CD4-positive, alpha-beta memory T cell (primary cell): ENCODE measurements at regions of chr1 and their contacts with region 1.

Region 1: DNA sequence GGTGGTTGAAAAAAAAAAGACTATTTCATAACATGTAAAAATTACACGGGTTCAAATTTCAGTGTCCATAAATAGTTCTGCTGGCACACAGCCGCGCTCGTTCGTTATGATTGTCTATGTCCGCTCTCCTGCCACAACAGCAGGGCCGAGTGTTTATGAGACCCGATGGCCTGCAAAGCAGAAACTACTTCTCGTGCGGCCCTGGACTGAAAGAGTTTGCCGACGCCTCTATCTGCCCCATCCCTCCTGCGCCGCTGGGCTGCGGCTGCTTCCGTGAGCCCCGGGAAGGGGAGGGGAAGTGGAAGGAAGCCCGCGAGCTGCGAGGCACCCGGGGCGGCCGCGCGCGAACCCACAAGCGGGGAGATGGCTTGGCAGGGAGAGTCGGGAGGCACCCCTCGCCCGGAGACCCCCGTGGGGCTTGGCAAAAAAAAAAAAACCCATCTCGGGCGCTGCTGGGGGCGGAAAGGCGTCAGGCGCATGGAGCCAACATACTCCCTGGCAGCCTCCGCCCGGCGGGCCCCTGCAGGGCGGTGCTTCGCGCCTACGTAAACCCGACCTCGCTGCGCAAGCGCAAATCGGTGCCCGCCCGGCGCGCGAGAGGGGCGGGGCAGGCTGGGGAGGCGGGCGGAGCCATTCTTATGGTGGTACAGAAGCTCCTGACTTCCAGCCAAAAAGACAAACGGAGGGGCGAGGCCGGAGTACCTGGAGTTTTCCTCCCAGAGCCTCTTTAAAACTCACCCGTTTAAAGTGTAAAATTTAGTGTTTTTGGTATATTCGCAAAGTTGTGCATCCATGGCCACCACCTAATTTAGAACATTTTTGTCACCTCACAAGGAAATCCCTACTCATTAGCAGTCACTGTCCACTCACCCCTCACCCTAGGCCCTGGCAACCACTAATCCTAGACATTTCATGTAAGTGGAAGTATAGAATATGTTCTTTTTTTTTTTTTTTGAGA is 8.3 kb downstream of the SLC27A3 start:
- DNase-seq: peak; percentile 89 to 94 (median 92)
- H3K4me3 ChIP-seq: peak overlapping the region; percentile 55 to 73
- H3K4me3 Mint-ChIP-seq: peak overlapping the region; percentile 88 to 97 (median 92)
- H3K27ac ChIP-seq: peak overlapping the region; percentile 84
- H3K27ac Mint-ChIP-seq: peak overlapping the region; percentile 89 to 99 (median 98)
- H3K4me1 ChIP-seq: peaks cover 6% of the 10 kb centered on the region
- H3K4me1 Mint-ChIP-seq: peaks cover 4 to 12% (median 11%) of the 10 kb centered on the region in 4 donors
- H3K27me3 ChIP-seq: no peaks in the 10 kb centered on the region
- H3K27me3 Mint-ChIP-seq: peaks cover 0 to 2% of the 10 kb centered on the region in 2 donors

Region 2: DNA sequence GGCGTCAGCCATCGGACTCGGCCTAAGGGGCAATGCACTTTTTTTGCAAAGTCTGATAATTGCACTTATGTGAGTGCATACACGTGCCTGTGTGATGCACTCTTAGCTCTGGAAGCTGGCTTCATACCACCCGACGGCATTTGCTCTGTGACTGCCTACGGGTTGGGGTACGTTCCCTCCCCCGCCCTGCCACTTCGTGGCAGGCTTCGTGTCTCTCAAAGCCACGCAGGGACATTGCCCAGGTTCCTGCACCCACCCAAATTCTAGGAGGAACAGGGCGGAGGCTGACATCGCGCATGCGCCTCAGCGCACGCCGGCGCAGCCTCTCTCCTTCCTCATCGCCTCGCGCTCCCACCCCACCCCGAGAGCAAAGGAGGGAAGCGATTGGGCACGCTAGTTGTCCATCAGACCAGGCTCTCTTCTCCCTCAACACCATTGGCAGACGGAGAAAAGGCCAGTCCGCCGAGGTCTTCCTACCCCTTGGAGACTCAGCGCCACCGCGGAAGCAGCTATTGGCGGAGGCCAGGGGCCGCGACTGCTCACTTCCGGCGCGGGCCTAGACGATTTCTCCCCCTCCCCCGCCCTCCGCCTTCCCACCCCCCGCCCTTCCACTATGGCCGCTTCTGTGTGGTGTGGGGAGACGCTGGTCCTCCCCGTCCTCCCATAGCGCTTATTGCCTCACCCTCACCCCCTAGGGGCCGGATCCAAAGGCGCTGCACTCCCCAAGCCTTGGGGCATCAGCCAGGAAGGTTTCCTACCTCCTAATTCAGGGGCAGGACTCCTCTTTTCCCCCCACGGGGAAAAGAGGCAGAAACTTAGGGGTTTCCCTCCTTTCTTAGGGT is 55.8 kb before region 1 on chr1 and contains the start of gene INTS3:
- CTCF ChIA-PET with region 1: no interaction called
- POLR2A ChIA-PET with region 1: no interaction called
- intact Hi-C with region 1: loop called (anchors 2 kb)
- DNase-seq: peak; percentile 98 to 100 (median 99)
- H3K4me3 ChIP-seq: peak within 1 kb of the TSS; percentile 79 to 98
- H3K4me3 Mint-ChIP-seq: peak within 1 kb of the TSS; percentile 88 to 96 (median 93)
- H3K27ac ChIP-seq: peak within 1 kb of the TSS; percentile 93
- H3K27ac Mint-ChIP-seq: peak within 1 kb of the TSS; percentile 93 to 99 (median 97)
- H3K4me1 ChIP-seq: peaks cover 32% of the 10 kb centered on the region
- H3K4me1 Mint-ChIP-seq: peaks cover 19 to 36% (median 29%) of the 10 kb centered on the region in 4 donors
- H3K27me3 ChIP-seq: no peaks in the 10 kb centered on the region
- H3K27me3 Mint-ChIP-seq: no peaks in the 10 kb centered on the region
- total RNA-seq, gene INTS3: 49.1 to 53.0 TPM

Region 3: DNA sequence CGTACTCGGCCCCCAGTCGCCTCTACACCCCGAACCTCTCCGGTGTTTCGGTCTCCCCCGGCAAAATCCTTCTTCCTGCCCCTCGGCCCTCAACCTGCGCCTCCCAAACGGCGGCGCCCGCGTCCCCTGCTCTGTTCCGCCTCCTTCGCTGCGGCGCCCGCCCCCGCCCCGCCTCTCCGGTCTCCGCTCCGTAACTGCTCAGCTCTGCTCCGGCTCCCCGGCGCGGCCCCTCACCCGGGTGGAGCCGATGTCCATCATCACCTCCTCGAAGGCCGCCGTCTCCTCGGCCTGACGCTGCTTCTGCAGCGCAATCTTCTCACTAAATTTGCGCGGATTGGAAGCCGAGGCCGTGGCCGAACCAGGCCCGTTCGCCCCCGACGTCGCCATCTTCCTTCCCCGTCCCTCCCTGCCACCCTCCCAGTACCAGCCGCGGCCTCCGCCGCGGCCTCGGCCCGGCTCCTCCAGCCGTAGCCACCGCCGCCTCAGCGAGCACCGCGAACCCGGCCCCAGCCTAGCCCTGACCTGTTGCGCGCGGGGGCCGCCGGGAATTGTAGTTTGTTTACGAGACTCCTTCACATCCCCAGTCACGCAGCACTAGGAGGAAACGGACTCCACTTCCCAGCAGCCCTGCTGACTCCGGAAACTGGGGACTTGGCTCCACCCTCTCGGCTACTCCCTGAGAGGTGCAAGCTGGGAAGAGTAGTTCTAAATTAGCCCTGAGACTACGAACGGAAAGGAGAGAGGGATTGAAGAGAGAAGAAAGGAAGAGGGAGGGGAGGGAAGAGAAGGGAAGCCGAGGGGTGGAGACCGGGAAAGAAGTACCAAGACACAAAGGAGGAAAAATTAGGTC is 174.8 kb after region 1 on chr1 and contains the start of gene CRTC2:
- CTCF ChIA-PET with region 1: no interaction called
- POLR2A ChIA-PET with region 1: interaction called, 3 read pairs
- intact Hi-C with region 1: loop called (anchors 5 kb)
- DNase-seq: peak; percentile 95 to 99 (median 97)
- H3K4me3 ChIP-seq: peak within 1 kb of the TSS; percentile 80 to 99
- H3K4me3 Mint-ChIP-seq: peak within 1 kb of the TSS; percentile 97 to 99 (median 99)
- H3K27ac ChIP-seq: peak within 1 kb of the TSS; percentile 90
- H3K27ac Mint-ChIP-seq: peak within 1 kb of the TSS; percentile 88 to 99 (median 97)
- H3K4me1 ChIP-seq: peaks cover 61% of the 10 kb centered on the region
- H3K4me1 Mint-ChIP-seq: peaks cover 42 to 75% (median 57%) of the 10 kb centered on the region in 4 donors
- H3K27me3 ChIP-seq: no peaks in the 10 kb centered on the region
- H3K27me3 Mint-ChIP-seq: no peaks in the 10 kb centered on the region
- total RNA-seq, gene CRTC2: 112 to 113 TPM

Region 4: DNA sequence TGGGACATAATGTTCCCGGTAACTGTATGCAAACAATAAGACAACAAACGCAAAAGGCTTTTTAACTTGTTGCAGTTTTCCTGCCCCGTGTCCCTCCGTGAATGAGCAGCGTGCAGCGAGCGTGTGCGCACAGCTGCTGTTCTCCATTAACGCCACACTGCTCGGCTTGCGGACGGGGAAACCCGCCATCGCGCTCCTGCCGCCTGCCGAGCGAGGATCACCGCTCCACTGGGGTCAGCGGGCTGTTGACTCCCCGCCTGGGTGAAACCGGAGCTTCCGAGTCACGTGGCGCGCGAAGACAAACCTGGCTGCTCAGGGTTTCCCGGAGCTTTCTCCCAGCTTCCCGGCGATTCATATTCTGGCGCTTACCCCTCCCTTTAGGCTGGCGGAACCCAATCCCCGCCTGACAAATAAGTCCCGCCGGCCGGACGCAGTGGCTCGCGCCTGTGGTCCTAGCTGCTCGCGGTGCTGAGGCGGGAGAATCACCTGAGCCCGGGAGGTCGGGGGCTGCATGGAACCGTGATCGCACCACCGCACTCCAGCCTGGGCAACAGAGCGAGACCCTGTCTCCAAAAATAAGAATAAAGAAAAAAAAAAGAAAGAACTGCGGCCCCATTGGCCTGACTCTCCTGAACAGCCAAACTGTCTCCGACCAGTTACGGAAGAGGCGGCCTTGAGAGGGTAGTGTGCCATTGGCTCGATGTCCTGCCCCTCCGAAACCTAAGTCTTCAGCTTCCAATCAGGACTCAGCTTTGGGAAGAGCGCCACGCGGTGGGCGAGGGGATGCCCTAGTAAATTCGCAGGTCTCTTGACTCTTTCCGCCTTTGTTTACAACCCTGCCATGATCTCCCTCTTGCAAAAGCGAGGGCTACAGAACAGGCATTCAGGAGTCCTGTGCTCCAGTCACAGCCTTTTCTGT is 183.8 kb after region 1 on chr1 and contains the start of gene CREB3L4:
- CTCF ChIA-PET with region 1: interaction called, 3 read pairs
- POLR2A ChIA-PET with region 1: interaction called, 11 read pairs
- intact Hi-C with region 1: no loop called
- DNase-seq: peak; percentile 82 to 91 (median 87)
- H3K4me3 ChIP-seq: peak within 1 kb of the TSS; percentile 45 to 66
- H3K4me3 Mint-ChIP-seq: peak within 1 kb of the TSS; percentile 86 to 97 (median 92)
- H3K27ac ChIP-seq: peak within 1 kb of the TSS; percentile 89
- H3K27ac Mint-ChIP-seq: peak within 1 kb of the TSS; percentile 95 to 99 (median 96)
- H3K4me1 ChIP-seq: peaks cover 46% of the 10 kb centered on the region
- H3K4me1 Mint-ChIP-seq: peaks cover 29 to 60% (median 47%) of the 10 kb centered on the region in 4 donors
- H3K27me3 ChIP-seq: no peaks in the 10 kb centered on the region
- H3K27me3 Mint-ChIP-seq: no peaks in the 10 kb centered on the region
- total RNA-seq, gene CREB3L4: 7.4 to 9.8 TPM

Region 5: DNA sequence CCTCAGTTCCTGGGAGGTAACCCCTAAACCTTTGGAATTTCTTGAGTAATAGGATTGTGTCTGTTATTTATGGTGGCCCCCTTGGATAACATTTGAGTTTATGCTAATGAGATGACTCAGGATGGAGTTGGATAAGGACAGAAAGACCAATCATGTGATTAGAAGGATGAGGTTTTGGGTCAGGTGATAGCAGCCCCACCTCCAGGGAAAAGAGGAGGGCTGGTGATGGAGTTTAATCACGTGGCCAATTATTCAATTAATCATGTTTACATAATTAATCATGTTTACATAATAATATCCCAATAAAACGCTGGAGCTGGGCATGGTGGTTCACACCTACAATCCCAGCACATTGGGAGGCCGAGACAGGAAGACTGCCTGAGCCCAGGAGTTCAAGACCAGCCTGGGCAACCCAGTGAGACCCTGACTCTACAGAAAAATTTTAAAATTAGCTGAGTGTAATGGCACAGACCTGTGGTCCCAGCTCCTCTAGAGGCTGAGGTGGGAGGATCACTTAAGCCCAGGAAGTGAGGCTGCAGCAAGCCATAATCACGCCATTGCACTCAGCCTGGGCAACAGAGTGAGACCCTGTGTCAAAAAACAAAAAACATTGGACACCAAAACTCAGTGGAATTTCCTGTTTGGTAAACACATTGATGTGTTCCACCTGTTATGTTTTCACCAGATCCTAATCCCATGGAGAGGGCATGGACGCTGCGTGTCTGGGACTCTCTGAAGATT is 298.0 kb after region 1 on chr1:
- CTCF ChIA-PET with region 1: no interaction called
- POLR2A ChIA-PET with region 1: no interaction called
- intact Hi-C with region 1: no loop called
- DNase-seq: no peak
- H3K4me3 ChIP-seq: no peak overlapping the region
- H3K4me3 Mint-ChIP-seq: no peak overlapping the region
- H3K27ac ChIP-seq: no peak overlapping the region
- H3K27ac Mint-ChIP-seq: no peak overlapping the region
- H3K4me1 ChIP-seq: no peaks in the 10 kb centered on the region
- H3K4me1 Mint-ChIP-seq: no peaks in the 10 kb centered on the region
- H3K27me3 ChIP-seq: no peaks in the 10 kb centered on the region
- H3K27me3 Mint-ChIP-seq: peaks cover 0 to 3% of the 10 kb centered on the region in 2 donors

Region 6: DNA sequence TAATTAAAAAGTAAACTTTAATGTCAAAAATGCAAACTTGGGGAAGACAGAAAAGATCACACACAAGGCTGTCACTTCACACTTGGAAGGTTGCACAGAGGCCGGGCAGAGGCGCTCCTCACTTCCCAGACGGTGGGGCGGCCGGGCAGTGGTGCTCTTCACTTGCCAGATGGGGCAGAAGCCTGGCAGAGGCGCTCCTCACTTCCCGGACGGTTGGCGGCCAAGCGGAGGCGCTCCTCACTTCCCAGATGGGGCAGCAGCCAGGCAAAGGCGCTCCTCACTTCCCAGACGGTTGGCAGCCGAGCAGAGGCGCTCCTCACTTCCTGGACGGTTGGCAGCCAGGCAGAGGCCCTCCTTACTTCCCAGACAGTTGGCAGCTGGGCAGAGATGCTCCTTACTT is 595.8 kb after region 1 on chr1:
- CTCF ChIA-PET with region 1: no interaction called
- POLR2A ChIA-PET with region 1: no interaction called
- intact Hi-C with region 1: no loop called
- DNase-seq: no peak
- H3K4me3 ChIP-seq: no peak overlapping the region
- H3K4me3 Mint-ChIP-seq: no peak overlapping the region
- H3K27ac ChIP-seq: no peak overlapping the region
- H3K27ac Mint-ChIP-seq: no peak overlapping the region
- H3K4me1 ChIP-seq: peaks cover 4% of the 10 kb centered on the region
- H3K4me1 Mint-ChIP-seq: peaks cover 0 to 7% (median 5%) of the 10 kb centered on the region in 4 donors
- H3K27me3 ChIP-seq: no peaks in the 10 kb centered on the region
- H3K27me3 Mint-ChIP-seq: no peaks in the 10 kb centered on the region